PC-9 (cell line): ENCODE measurements at regions of chr4 and their contacts with region 1.

Region 1: GRCh38 chr4:138242076-138242833 is at the start of gene SLC7A11:
- DNase-seq: peak; percentile 86 to 96
- H3K4me3 ChIP-seq: peak within 1 kb of the TSS; percentile 88
- H3K27ac ChIP-seq: peak within 1 kb of the TSS; percentile 100
- H3K4me1 ChIP-seq: peaks cover 25% of the 10 kb centered on the region
- H3K27me3 ChIP-seq: no peaks in the 10 kb centered on the region
- CTCF ChIP-seq: no peak
- total RNA-seq, gene SLC7A11: 110 and 187 TPM in 2 replicates

Region 2: DNA sequence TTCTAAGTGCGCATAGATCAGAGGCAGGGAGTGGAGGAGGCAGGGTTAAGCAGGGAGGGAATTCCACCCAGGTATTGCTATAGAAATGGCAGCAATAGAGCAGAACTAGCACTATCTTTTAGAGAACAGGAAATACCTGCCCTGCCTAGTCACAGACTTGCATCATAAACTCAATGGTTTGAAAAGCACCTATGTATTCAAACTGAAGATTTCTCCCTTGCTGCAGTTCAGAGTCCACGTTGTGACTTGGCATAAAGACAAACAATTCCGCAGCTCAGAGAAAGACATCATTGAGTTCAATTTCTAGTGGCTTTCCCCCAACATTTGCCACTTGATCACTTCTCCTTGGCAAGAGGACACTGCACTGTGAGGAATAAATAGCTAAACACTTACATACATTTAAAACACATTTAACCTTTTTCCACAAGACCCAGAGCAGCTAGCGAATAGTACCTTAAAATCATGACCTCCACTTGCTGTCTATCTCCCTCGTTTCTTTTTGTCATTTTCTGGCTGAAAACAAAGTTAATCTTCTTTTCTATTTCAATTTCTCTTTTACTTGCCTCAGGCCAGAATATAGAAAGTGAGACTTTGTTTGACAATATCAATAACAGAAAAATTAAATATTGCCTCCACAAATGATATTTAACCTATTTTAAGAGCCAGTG is 42.6 kb before region 1 on chr4:
- CTCF ChIA-PET with region 1: no interaction called
- POLR2A ChIA-PET with region 1: interaction called, 5 read pairs
- intact Hi-C with region 1: loop called (anchors 1 kb)
- DNase-seq: peak; percentile 66 to 72
- H3K4me3 ChIP-seq: no peak overlapping the region
- H3K27ac ChIP-seq: peak overlapping the region; percentile 78
- H3K4me1 ChIP-seq: peaks cover 40% of the 10 kb centered on the region
- H3K27me3 ChIP-seq: no peaks in the 10 kb centered on the region
- CTCF ChIP-seq: no peak

Region 3: GRCh38 chr4:138259801-138260200 is 17.5 kb after region 1 on chr4:
- CTCF ChIA-PET with region 1: no interaction called
- POLR2A ChIA-PET with region 1: interaction called, 3 read pairs
- intact Hi-C with region 1: loop called (anchors 1 kb)
- DNase-seq: peak in 1 of 2 experiments; percentile 55
- H3K4me3 ChIP-seq: no peak overlapping the region
- H3K27ac ChIP-seq: no peak overlapping the region
- H3K4me1 ChIP-seq: peaks cover 9% of the 10 kb centered on the region; the same call in 1 of the 2 replicates
- H3K27me3 ChIP-seq: no peaks in the 10 kb centered on the region
- CTCF ChIP-seq: no peak

Region 4: GRCh38 chr4:138308405-138308804 is 66.2 kb after region 1 on chr4:
- CTCF ChIA-PET with region 1: no interaction called
- POLR2A ChIA-PET with region 1: interaction called, 6 read pairs
- intact Hi-C with region 1: loop called (anchors 1 kb)
- DNase-seq: peak; percentile 72 to 73
- H3K4me3 ChIP-seq: peak overlapping the region; percentile 6; the same call in 1 of the 2 replicates
- H3K27ac ChIP-seq: peak overlapping the region; percentile 44
- H3K4me1 ChIP-seq: peaks cover 15% of the 10 kb centered on the region
- H3K27me3 ChIP-seq: no peaks in the 10 kb centered on the region
- CTCF ChIP-seq: no peak

Region 5: DNA sequence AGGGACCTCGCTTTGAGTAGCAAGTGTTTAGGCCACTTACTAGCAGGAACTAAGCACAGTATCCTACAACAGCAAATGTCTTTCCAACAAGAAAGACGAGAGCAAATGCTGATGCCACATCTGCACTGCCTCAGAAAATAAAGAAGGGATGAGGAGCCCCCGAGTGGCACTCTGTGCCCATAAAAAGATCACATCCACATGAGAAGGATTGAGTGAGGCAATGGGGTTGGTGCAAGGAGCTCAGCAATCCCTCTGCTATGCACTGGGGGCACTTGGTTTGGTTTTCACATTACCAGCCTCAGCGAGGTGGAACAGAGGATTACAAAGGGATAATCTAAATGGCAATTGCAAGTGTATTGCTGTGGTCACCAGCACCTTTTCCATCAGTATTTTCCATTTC is 252.7 kb after region 1 on chr4:
- CTCF ChIA-PET with region 1: interaction called, 4 read pairs
- POLR2A ChIA-PET with region 1: no interaction called
- intact Hi-C with region 1: loop called (anchors 1 kb)
- DNase-seq: peak in 1 of 2 experiments; percentile 41
- H3K4me3 ChIP-seq: no peak overlapping the region
- H3K27ac ChIP-seq: no peak overlapping the region
- H3K4me1 ChIP-seq: no peaks in the 10 kb centered on the region
- H3K27me3 ChIP-seq: no peaks in the 10 kb centered on the region
- CTCF ChIP-seq: 0 out of 2 replicates have a peak, but pooled peaks have one; percentile 31

Region 6: GRCh38 chr4:138576684-138577083 is 334.4 kb after region 1 on chr4:
- CTCF ChIA-PET with region 1: no interaction called
- POLR2A ChIA-PET with region 1: no interaction called
- intact Hi-C with region 1: loop called (anchors 2 kb)
- DNase-seq: no peak
- H3K4me3 ChIP-seq: no peak overlapping the region
- H3K27ac ChIP-seq: no peak overlapping the region
- H3K4me1 ChIP-seq: no peaks in the 10 kb centered on the region
- H3K27me3 ChIP-seq: no peaks in the 10 kb centered on the region
- CTCF ChIP-seq: peak; percentile 66

Region 7: DNA sequence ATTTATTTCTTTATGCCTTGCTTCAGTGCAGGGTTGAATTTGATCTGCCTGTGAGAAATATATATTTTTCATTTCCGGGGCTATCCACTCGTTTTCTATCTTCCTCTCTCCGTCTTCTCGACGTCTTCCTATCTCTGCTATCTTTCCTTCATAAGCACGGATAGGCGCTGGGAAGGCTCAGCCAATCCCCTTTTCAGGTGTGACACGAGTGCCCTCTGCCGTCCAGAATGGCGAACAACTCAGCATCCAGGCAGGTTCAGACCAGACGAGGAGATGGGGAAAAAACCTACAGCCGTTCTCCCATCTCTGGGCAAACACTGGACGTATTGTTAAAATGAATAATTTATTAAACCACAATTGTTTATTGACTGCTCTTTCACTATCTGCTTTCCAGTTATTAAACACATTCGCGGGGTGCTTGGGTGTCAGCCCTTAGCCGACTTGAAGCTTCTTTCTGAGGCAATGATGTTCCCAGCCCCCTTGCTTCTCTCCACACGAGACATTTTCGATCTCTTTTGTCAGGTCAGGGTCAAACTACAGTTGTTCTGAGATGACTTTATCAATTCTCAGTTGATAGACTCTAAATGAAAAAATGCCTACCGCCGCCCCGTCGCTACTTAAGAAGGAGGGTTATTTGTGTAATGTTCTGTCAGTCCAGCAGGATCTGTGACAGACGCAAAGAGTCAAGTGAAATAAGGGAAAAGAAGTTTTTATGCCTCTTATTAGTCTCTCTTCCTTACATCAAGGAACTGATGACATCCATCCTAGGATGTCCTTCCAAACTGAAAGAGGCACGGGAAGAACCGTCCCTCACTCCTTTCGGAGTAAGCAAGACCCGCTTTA is 677.1 kb after region 1 on chr4:
- CTCF ChIA-PET with region 1: no interaction called
- POLR2A ChIA-PET with region 1: interaction called, 18 read pairs
- intact Hi-C with region 1: no loop called
- DNase-seq: peak; percentile 44 to 77
- H3K4me3 ChIP-seq: no peak overlapping the region
- H3K27ac ChIP-seq: no peak overlapping the region
- H3K4me1 ChIP-seq: no peaks in the 10 kb centered on the region
- H3K27me3 ChIP-seq: no peaks in the 10 kb centered on the region
- CTCF ChIP-seq: peak; percentile 69